Endothelial cell of umbilical vein (primary cell): ENCODE measurements at regions of chr3 and their contacts with region 1.

Region 1: DNA sequence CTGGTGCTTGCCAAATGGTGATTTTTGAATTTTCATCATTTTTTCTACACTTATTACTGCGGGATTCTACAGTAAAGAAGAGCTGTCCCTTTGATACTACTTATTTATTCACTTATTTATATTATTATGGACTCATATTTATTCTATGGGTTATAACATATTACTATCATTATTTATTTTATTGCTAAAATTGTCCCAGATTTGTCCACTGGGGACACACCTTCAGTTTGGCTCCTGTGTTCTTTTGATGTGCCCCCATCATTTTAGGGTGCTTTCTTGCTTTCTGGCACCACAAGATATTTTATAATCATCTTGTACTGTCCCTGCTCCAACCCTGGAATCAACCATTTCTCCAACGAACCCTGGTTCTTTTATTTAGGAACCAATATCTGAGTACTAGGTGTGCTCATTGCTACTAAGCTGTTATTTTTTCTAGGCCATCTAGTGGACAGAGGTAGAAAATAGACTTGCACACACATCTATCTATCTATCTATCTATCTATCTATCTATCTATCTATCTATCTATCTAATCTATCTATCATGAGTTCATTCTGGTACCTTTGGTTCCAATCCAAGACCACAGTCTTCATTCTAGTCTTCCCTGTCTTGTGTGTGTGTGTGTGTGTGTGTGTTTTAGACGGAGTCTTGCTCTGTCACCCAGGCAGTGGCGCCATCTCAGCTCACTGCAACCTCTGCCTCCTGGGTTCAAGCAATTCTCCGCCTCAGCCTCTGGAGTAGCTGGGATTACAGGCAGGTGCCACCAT is 16.0 kb downstream of the SLC22A14 start:
- DNase-seq: peak; percentile 33
- H3K4me3 ChIP-seq: no peak overlapping the region
- H3K27ac ChIP-seq: no peak overlapping the region
- H3K4me1 ChIP-seq: no peaks in the 10 kb centered on the region
- H3K27me3 ChIP-seq: no peaks in the 10 kb centered on the region
- CTCF ChIP-seq: peak; percentile 26 to 36
- POLR2A ChIP-seq: no peak

Region 2: GRCh38 chr3:38283810-38284755 is 14.0 kb before region 1 on chr3:
- CTCF ChIA-PET with region 1: interaction called, 16 read pairs
- POLR2A ChIA-PET with region 1: no interaction called
- dilution Hi-C with region 1: no loop called
- intact Hi-C with region 1: no loop called
- DNase-seq: no peak
- H3K4me3 ChIP-seq: no peak overlapping the region
- H3K27ac ChIP-seq: no peak overlapping the region
- H3K4me1 ChIP-seq: no peaks in the 10 kb centered on the region
- H3K27me3 ChIP-seq: no peaks in the 10 kb centered on the region
- CTCF ChIP-seq: no peak
- POLR2A ChIP-seq: no peak

Region 3: GRCh38 chr3:38623539-38623938 is 325.4 kb after region 1 on chr3:
- CTCF ChIA-PET with region 1: no interaction called
- POLR2A ChIA-PET with region 1: no interaction called
- dilution Hi-C with region 1: no loop called
- intact Hi-C with region 1: no loop called
- DNase-seq: no peak
- H3K4me3 ChIP-seq: no peak overlapping the region
- H3K27ac ChIP-seq: no peak overlapping the region
- H3K4me1 ChIP-seq: no peaks in the 10 kb centered on the region
- H3K27me3 ChIP-seq: no peaks in the 10 kb centered on the region
- CTCF ChIP-seq: no peak
- POLR2A ChIP-seq: no peak